GM18951 (cell line): ENCODE measurements at regions of chr5 and their contacts with region 1.

Region 1: DNA sequence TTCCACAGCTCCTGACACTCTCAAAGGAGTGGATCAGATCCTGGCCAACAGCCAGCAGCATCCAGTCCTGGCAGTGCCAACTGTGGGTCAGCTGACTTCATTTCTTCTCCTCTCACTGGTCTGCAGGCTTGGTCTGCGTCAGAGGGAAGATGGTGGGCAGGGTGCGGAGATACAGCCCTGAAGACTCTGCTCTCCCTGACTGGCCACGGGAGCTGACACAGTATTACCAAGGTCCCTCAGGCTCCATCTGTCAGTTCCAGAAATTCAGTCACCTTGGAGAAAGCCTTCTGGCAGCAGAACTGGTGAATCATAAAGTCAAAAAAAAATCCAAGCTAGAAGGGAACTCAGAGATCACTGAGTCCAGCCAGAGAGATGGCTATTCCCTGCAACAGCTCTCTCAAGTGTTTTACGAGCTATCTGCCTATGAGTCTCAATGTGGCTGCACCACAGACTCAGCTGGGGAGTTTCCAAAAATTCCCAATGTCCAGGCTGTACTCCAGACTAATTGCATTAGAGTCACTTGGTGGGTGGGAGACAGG is 28.0 kb downstream of the C1QTNF2 start:
- POLR2A ChIP-seq: no peak

Region 2: GRCh38 chr5:160021831-160022446 is 320.5 kb before region 1 on chr5:
- in situ Hi-C with region 1: loop called (anchors 10 kb)
- POLR2A ChIP-seq: no peak

Region 3: DNA sequence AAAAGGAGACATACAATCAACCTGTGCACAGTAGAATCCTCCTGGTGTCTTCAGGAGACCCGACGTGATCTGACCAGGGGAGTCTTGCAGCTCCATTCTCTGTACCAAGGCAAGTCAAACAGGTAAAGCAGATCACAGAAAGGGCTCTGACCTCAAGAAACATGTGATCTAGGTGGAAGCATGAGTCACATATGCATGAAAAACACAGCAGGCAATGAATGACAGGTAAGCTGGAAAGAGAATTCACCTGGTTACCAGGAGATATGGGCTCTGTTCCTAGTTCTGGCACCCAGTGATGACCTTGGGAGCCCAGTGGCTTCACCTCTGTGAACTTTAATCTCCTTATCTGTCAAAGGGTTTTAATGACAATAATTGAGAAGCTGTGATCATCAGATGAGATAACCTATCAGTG is 132.5 kb before region 1 on chr5:
- in situ Hi-C with region 1: loop called (anchors 10 kb)
- POLR2A ChIP-seq: no peak